Dendritic cell treated with granulocyte-macrophage colony-stimulating factor and Interleukin-4, amounts not matched to agents 40 ng/mL and 50 ng/mL, for 4 days (primary cell): ENCODE measurements at regions of chr4 and their contacts with region 1.

Region 1: DNA sequence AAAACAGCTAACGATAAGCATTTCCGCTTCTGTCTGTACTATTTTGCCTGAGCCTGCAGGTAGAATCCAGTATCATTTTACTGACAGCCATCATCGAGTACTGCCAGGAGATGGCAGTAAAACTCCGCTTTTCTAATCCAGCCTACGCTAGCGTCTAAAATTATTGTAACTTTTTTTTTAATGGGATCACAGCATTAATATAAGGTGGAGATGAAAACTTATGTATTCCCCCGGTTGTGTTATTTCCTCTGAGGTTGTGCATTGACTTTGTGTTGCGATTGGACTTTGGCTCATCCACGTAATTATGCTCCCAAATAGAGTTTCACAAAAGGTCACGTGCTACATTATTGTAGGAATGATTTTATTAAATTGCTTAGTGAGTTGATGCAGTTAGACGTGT is 248.1 kb downstream of the C4orf33 start:
- H3K4me3 Mint-ChIP-seq: no peak overlapping the region
- H3K27ac Mint-ChIP-seq: no peak overlapping the region
- H3K4me1 Mint-ChIP-seq: peaks cover 25% of the 10 kb centered on the region
- H3K27me3 Mint-ChIP-seq: no peaks in the 10 kb centered on the region

Region 2: GRCh38 chr4:129532573-129532972 is 188.5 kb after region 1 on chr4:
- intact Hi-C with region 1: loop called (anchors 10 kb)
- H3K4me3 Mint-ChIP-seq: no peak overlapping the region
- H3K27ac Mint-ChIP-seq: no peak overlapping the region
- H3K4me1 Mint-ChIP-seq: peaks cover 26% of the 10 kb centered on the region
- H3K27me3 Mint-ChIP-seq: peaks cover 25% of the 10 kb centered on the region